CD8-positive, alpha-beta T cell (primary cell): ENCODE measurements at regions of chr11 and their contacts with region 1.

Region 1: GRCh38 chr11:57335343-57336110 is at the start of gene SSRP1:
- DNase-seq: peak; percentile 70 to 95 (median 86)
- ATAC-seq: peak; percentile 96
- H3K4me3 ChIP-seq: peak within 1 kb of the TSS; percentile 78 to 82
- H3K4me3 Mint-ChIP-seq: peak within 1 kb of the TSS; percentile 86
- H3K27ac ChIP-seq: peak within 1 kb of the TSS; percentile 83 to 91
- H3K27ac Mint-ChIP-seq: peak within 1 kb of the TSS; percentile 94
- H3K4me1 ChIP-seq: peaks cover 23% of the 10 kb centered on the region
- H3K4me1 Mint-ChIP-seq: peaks cover 33% of the 10 kb centered on the region
- H3K27me3 ChIP-seq: no peaks in the 10 kb centered on the region
- H3K27me3 Mint-ChIP-seq: no peaks in the 10 kb centered on the region
- CTCF ChIP-seq: no peak
- total RNA-seq, gene SSRP1: 34.3 to 36.3 TPM

Region 2: DNA sequence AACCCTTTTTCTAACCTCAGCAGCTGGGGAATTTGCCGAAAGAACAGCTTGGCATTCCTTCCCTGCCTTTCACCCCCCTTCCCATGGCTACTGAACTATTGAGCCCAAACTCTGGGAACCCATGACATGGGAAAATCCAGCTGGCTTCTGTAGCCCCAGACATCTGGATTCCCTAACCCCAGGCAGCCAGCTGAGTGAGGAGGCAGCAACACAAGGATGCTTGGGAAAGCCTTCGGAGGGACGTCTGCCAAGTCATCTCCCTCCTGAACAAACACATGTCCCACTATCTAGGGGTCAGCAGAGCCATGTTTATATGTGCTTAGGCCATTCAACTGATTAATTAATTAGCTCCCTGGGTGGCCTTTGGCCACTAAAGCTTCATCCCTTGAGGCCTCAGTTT is 132.2 kb before region 1 on chr11:
- CTCF ChIA-PET with region 1: no interaction called
- POLR2A ChIA-PET with region 1: no interaction called
- intact Hi-C with region 1: no loop called
- DNase-seq: no peak
- ATAC-seq: no peak
- H3K4me3 ChIP-seq: no peak overlapping the region
- H3K4me3 Mint-ChIP-seq: no peak overlapping the region
- H3K27ac ChIP-seq: no peak overlapping the region
- H3K27ac Mint-ChIP-seq: no peak overlapping the region
- H3K4me1 ChIP-seq: no peaks in the 10 kb centered on the region
- H3K4me1 Mint-ChIP-seq: no peaks in the 10 kb centered on the region
- H3K27me3 ChIP-seq: no peaks in the 10 kb centered on the region
- H3K27me3 Mint-ChIP-seq: peaks cover 26% of the 10 kb centered on the region
- CTCF ChIP-seq: no peak

Region 3: GRCh38 chr11:57324886-57325734 is 10.4 kb before region 1 on chr11 and contains the start of gene TNKS1BP1:
- CTCF ChIA-PET with region 1: interaction called, 3 read pairs
- POLR2A ChIA-PET with region 1: interaction called, 44 read pairs
- intact Hi-C with region 1: loop called (anchors 1 kb)
- DNase-seq: peak; percentile 74 to 93 (median 88)
- ATAC-seq: peak; percentile 88
- H3K4me3 ChIP-seq: peak within 1 kb of the TSS; percentile 75 to 98
- H3K4me3 Mint-ChIP-seq: peak within 1 kb of the TSS; percentile 87
- H3K27ac ChIP-seq: peak within 1 kb of the TSS; percentile 80 to 81
- H3K27ac Mint-ChIP-seq: peak within 1 kb of the TSS; percentile 96
- H3K4me1 ChIP-seq: peaks cover 29% of the 10 kb centered on the region
- H3K4me1 Mint-ChIP-seq: peaks cover 34% of the 10 kb centered on the region
- H3K27me3 ChIP-seq: no peaks in the 10 kb centered on the region
- H3K27me3 Mint-ChIP-seq: no peaks in the 10 kb centered on the region
- CTCF ChIP-seq: no peak
- total RNA-seq, gene TNKS1BP1: 13.5 to 14.0 TPM